Lower leg skin (tissue), 4 donors: ENCODE measurements at regions of chr18 and their contacts with region 1.

Region 1: DNA sequence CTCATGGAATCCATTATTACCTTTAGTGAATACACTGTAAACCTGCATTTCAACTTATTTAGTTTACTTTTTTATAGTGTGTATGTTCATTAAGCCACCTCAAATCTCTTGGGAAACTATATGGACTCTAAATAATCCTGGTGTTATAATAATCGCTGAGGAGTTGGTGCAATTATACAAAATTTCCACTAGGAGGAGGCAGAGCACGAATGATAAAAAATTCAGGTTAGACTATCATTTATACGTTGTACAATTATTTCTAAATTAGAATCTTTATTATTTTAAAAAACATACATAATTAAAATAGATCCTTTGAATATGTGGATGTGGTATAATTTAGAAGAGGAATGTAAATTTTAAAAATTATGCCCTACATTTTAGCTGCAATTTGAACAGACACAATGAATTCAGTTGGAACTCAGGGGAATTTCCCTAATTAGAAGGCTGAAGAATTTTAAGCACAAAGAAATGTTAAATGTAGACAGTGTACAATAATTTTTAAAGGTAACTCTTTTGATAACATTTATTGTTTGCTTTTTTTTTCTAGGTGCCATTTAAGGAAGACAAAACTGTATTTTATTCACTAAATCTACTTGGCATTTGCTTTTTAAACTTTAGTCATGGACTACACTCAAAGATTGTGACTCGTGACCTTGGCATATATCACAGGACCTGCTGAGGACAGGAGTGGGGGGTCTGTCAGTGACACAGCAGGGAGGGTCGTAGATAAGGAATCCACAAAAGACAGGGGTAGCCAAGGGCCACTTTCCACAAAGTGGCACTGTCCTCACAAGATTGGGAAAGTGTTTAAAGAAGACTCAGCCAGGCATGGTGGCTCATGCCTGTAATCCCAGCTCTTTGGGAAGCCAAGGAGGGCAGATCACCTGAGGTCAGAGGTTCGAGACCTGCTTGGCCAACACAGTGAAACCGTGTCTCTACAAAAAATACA is 45.5 kb downstream of the RAB12 start:
- DNase-seq: no peak
- H3K4me3 ChIP-seq: no peak overlapping the region
- CTCF ChIP-seq: no peak
- POLR2A ChIP-seq: no peak

Region 2: DNA sequence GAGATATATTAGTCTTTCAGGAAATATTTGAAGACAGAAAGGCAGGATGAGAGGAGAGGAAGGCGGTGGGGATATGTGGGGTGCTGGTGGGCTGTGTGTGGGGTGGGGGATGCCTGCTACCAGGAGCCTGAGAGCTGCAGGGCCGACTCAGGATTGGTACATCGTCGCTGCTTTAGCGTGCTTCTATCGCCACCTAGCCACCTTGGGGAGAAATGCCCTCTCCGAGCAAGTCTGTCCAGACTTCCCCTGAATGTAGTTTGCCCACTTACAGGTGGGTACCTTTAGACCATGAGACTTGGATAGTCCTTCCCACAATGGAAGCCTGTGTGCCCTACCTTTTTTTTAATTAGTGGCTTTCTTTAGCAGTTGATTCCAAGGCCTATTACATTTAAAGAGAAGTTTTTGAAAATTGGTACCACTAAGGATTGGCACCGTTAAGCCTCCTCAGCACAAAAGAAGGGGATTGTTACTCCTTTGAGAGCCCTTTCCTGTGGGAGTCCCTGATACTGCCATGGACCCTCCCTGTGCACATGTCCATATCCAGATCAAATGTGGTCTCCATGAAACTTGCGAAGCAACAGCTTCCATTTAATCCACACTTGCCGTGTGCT is 333.6 kb after region 1 on chr18:
- intact Hi-C with region 1: loop called (anchors 10 kb)
- DNase-seq: peak; percentile 35 to 88
- H3K4me3 ChIP-seq: no peak overlapping the region
- CTCF ChIP-seq: no peak
- POLR2A ChIP-seq: no peak